PC-3 (cell line): ENCODE measurements at regions of chr12 and their contacts with region 1.

Region 1: DNA sequence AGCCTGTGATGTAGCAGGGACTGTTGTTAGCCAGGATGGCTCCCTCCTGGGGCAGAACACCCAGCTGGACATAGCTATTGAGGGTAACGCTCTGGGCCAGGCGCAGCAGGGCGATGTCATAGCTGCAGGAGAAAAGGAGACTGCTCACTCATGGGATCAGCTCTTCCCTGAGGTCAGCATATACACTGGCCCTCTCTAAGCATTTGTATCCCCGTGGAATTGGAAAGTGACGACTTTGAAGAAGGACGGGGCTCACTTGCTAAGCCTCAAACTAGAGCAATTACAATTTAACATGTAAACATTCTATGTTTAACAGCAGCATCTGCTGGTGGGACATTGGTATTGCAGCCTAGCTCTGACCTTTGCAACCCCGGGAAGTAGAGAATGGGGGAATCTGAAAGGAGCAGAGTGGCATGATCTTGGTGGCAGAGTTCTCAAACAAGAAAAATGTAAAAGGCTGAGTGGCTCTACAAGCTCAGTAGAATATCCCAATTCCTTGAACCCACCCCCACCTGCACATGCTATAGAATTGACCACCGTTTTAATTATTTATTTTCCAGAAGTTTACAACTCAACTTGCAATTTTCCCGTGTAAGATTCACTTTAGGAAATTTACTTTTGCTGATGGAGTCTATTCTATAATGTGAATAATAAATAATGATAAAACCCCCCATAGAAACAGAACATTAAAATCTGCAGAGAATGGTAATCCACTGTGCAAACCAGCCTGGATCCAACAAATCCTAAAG is 5.0 kb downstream of the CELA1 start:
- DNase-seq: peak; percentile 88
- ATAC-seq: peak; percentile 85
- H3K4me3 ChIP-seq: peak overlapping the region; percentile 60
- H3K27ac ChIP-seq: no peak overlapping the region
- H3K4me1 ChIP-seq: peaks cover 11% of the 10 kb centered on the region
- H3K27me3 ChIP-seq: no peaks in the 10 kb centered on the region
- CTCF ChIP-seq: peak; percentile 98

Region 2: GRCh38 chr12:50825372-50825838 is 516.0 kb before region 1 on chr12:
- CTCF ChIA-PET with region 1: no interaction called
- POLR2A ChIA-PET with region 1: no interaction called
- intact Hi-C with region 1: loop called (anchors 5 kb)
- DNase-seq: peak; percentile 76
- ATAC-seq: peak; percentile 78
- H3K4me3 ChIP-seq: no peak overlapping the region
- H3K27ac ChIP-seq: no peak overlapping the region
- H3K4me1 ChIP-seq: no peaks in the 10 kb centered on the region
- H3K27me3 ChIP-seq: no peaks in the 10 kb centered on the region
- CTCF ChIP-seq: peak; percentile 66

Region 3: GRCh38 chr12:51047655-51048540 is 293.5 kb before region 1 on chr12 and contains the start of gene LETMD1:
- CTCF ChIA-PET with region 1: no interaction called
- POLR2A ChIA-PET with region 1: interaction called, 4 read pairs
- intact Hi-C with region 1: loop called (anchors 5 kb)
- DNase-seq: peak; percentile 99
- ATAC-seq: peak; percentile 99
- H3K4me3 ChIP-seq: peak within 1 kb of the TSS; percentile 88
- H3K27ac ChIP-seq: peak within 1 kb of the TSS; percentile 79
- H3K4me1 ChIP-seq: peaks cover 12% of the 10 kb centered on the region
- H3K27me3 ChIP-seq: no peaks in the 10 kb centered on the region
- CTCF ChIP-seq: peak; percentile 93
- total RNA-seq, gene LETMD1: 46.9 and 47.1 TPM in 2 replicates

Region 4: DNA sequence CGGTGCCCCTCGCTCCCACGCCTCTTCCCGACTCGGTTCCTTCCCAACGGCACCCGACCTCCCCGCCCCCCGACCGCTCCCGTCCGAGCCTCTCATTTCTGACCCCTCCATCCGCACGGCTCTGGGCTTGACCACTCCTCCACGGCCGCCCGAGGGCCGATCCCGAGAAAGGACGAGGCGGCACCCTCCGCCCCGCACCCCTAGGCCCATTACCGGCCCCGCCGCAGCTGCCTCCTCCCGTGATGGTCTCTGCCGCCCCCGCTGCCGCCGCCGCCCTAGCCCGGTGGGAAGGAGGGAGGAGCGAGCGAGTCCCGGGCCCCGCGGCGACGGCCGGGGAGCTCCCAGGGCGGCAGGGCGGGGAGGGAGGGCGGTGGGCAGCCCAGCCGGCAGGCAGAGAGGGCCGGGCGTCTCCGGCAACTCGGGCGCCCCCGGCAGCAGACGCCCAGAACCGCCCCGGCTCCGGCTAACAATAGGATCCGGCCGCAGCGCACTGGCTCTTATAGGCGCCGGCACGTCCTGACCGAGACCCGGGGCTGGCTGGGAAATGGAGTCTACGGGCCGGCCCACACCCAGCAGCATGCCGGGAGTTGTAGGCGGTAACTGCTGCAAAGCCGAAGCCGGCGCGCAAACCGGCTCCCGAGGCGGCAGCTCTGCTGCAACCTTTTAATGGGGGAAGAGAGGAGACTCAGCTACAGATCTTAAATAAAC is 258.2 kb before region 1 on chr12 and contains the start of gene CSRNP2:
- CTCF ChIA-PET with region 1: no interaction called
- POLR2A ChIA-PET with region 1: no interaction called
- intact Hi-C with region 1: loop called (anchors 5 kb)
- DNase-seq: peak; percentile 94
- ATAC-seq: peak; percentile 99
- H3K4me3 ChIP-seq: peak within 1 kb of the TSS; percentile 92
- H3K27ac ChIP-seq: no peak within 1 kb of the TSS
- H3K4me1 ChIP-seq: peaks cover 12% of the 10 kb centered on the region
- H3K27me3 ChIP-seq: no peaks in the 10 kb centered on the region
- CTCF ChIP-seq: no peak
- total RNA-seq, gene CSRNP2: 18.9 and 23.3 TPM in 2 replicates

Region 5: DNA sequence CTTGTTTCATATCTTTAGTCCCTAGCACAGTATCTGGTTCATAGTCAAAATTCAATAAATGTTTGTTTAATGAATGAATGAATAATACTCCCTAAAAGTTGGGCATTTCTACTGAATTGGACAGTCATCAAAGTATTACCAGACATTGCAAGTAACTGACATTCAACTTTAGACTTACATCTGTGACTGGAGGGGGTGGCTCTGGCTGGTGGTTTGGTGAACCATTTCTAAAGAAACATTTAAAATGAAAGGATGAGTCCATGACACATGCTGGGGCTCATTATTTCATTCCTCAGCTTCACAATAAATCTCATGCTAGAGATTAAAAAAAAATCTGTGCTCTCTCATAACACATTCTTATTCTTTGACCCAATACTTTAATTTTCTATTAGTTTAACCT is 237.5 kb before region 1 on chr12:
- CTCF ChIA-PET with region 1: no interaction called
- POLR2A ChIA-PET with region 1: no interaction called
- intact Hi-C with region 1: loop called (anchors 5 kb)
- DNase-seq: no peak
- ATAC-seq: no peak
- H3K4me3 ChIP-seq: no peak overlapping the region
- H3K27ac ChIP-seq: no peak overlapping the region
- H3K4me1 ChIP-seq: no peaks in the 10 kb centered on the region
- H3K27me3 ChIP-seq: no peaks in the 10 kb centered on the region
- CTCF ChIP-seq: no peak

Region 6: DNA sequence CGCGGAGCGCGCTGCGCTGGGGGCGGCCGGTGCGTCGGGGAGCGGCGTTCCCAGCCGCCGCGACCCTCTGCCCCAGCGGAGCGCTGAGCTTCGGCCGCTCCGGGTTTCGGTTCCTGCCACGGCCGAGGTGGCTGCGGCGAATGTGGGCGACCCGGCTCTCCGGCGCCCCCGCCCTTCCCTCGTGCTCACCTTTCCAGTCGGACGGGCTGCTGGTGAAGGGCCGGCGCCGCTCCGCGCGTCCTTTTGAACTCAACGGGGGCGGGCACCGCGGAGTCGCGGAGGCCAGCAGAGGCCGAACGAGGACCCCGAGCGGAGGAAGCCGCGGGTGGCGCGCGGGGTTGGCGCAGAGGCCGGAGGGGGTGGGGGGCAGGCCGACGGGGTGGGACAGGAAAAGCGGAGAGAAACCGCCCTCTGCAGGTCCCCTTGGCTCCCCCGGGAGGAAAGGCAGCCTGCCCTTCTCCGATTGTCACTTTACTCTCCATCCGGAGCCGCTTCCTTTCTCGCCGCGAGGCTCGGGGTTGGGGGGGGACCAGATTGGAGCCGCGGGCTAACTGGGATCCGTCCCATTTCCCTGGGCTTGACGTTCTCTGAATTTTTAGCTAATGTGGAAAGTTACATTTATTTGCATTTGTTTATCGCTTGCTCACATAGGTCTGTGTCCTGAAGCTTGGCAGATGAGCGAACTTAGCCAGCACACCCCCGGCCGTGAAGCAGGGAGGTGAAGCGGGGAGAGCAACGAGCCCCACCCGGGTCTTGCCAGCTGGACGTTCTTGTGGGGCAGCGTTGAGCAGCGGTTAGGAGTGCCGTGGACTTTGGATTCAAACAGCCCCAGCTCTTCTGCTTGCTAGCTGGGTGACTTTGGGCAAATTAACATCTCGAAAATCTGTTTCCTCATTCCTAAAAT is 71.1 kb before region 1 on chr12 and contains the start of gene SMAGP:
- CTCF ChIA-PET with region 1: interaction called, 54 read pairs
- POLR2A ChIA-PET with region 1: interaction called, 11 read pairs
- intact Hi-C with region 1: loop called (anchors 1 kb)
- DNase-seq: peak; percentile 86
- ATAC-seq: peak; percentile 48
- H3K4me3 ChIP-seq: peak within 1 kb of the TSS; percentile 68
- H3K27ac ChIP-seq: peak within 1 kb of the TSS; percentile 97
- H3K4me1 ChIP-seq: peaks cover 46% of the 10 kb centered on the region
- H3K27me3 ChIP-seq: no peaks in the 10 kb centered on the region
- CTCF ChIP-seq: no peak
- total RNA-seq, gene SMAGP: 55.3 and 62.5 TPM in 2 replicates

Region 7: GRCh38 chr12:51307655-51308593 is 33.5 kb before region 1 on chr12:
- CTCF ChIA-PET with region 1: interaction called, 18 read pairs
- POLR2A ChIA-PET with region 1: no interaction called
- intact Hi-C with region 1: loop called (anchors 1 kb)
- DNase-seq: peak; percentile 94
- ATAC-seq: peak; percentile 100
- H3K4me3 ChIP-seq: peak overlapping the region; percentile 46
- H3K27ac ChIP-seq: peak overlapping the region; percentile 91
- H3K4me1 ChIP-seq: peaks cover 19% of the 10 kb centered on the region
- H3K27me3 ChIP-seq: no peaks in the 10 kb centered on the region
- CTCF ChIP-seq: no peak